Activated naive CD4-positive, alpha-beta T cell treated with anti-CD3 and anti-CD28 coated beads for 36 hours (primary cell): ENCODE measurements at regions of chr1 and their contacts with region 1.

Region 1: DNA sequence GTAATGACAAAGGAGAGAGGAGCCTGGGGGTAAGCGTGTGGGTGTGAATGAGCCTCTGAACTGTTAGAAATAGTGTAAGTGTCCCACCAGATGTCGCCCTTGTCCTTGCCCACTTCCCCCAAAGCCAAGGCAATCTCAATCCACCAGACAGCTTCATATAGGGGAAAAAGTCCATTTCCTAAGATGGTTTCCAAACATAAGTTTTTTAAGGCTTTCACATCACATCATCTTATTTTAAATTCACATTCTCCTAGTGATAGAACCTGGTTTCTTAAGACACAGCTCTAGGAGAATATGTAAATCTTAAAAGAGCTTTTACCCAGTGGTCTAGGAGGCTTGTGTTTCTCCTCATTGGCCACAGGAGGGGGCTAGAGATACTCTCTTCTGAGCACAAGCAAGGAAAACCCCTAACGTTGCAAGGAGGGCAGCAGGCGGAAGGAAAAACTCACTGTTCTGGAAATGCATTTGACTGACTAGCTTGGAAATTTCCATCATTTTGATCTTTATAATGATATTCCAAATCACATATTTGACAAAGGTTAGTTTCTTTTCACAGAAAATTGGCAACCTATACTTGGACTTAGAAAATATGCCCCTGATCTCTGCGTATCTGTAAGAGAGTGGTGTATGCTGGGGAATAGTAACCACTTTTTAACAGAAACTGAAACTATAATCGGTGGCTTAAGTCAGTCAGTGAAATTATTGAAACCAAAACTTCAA is 51.9 kb upstream of the LPAR3 start:
- DNase-seq: peak; percentile 81
- H3K4me3 Mint-ChIP-seq: peak overlapping the region; percentile 74
- H3K27ac Mint-ChIP-seq: peak overlapping the region; percentile 92
- H3K4me1 Mint-ChIP-seq: peaks cover 14% of the 10 kb centered on the region
- H3K27me3 Mint-ChIP-seq: no peaks in the 10 kb centered on the region

Region 2: GRCh38 chr1:84973498-84974334 is 28.8 kb after region 1 on chr1:
- CTCF ChIA-PET with region 1: interaction called, 7 read pairs
- intact Hi-C with region 1: loop called (anchors 2 kb)
- DNase-seq: no peak
- H3K4me3 Mint-ChIP-seq: no peak overlapping the region
- H3K27ac Mint-ChIP-seq: no peak overlapping the region
- H3K4me1 Mint-ChIP-seq: peaks cover 17% of the 10 kb centered on the region
- H3K27me3 Mint-ChIP-seq: peaks cover 2% of the 10 kb centered on the region

Region 3: DNA sequence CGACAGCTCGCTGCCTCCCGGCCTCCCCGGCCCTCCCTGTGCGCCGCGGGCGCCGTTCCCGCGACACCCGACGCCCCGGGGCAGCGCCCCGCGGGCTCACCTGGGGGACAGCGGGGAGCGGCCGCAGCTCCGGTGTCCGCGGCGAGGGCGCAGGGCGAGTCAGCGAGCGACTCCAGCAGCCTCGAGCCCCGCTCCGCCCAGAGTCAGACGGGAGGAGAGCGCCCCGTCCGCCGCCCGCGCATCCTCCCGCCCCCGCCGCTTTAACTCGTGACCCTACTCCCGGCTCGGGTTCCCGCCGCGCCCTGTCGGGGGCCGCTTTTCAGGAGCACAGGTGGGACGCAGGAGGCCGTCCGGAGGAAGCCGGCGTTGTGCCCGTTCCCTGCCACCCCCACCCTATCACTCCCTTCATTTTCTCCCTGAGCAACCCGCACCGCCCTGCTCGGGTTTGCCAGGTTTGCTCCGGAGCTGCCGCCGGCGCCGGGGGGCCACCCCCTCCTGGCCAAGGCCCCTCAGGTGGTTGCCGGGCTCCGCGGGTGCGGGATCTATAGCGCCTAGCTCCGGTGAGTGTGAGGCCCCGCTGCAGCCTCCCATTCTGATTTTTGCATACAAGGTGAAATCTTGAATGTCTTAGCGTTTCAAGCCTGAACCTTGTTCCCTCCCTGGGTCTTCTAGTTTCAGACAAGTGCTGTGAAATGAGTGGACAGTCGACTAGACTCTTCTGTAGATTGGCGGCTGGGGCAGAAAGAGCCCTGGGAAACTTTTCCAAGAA is 103.6 kb after region 1 on chr1 and contains the start of gene MCOLN3:
- CTCF ChIA-PET with region 1: interaction called, 8 read pairs
- intact Hi-C with region 1: loop called (anchors 1 kb)
- DNase-seq: peak; percentile 52
- H3K4me3 Mint-ChIP-seq: peak within 1 kb of the TSS; percentile 68
- H3K27ac Mint-ChIP-seq: no peak within 1 kb of the TSS
- H3K4me1 Mint-ChIP-seq: peaks cover 18% of the 10 kb centered on the region
- H3K27me3 Mint-ChIP-seq: peaks cover 33% of the 10 kb centered on the region
- total RNA-seq, gene MCOLN3: 0.19 to 0.30 TPM

Region 4: DNA sequence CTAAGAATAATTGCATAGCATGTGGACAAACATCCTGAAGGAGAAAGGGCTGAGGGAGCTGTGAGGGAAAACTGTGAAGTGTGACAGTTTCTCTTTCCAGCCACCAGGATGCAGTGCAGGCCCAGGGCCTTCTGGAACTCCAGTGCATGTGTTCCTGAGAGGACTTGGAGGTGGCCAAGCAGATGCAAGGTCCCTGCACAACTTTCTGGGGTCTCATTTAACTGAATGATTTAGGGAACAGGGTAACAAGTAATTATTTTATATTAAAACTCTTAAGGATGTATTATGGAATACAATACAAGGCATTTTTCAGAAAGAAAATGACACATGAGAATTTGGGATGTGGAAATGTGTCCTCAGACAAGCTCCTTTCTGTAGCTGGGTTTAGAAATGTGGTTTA is 164.5 kb after region 1 on chr1:
- CTCF ChIA-PET with region 1: interaction called, 35 read pairs
- intact Hi-C with region 1: loop called (anchors 1 kb)
- DNase-seq: peak; percentile 48
- H3K4me3 Mint-ChIP-seq: no peak overlapping the region
- H3K27ac Mint-ChIP-seq: no peak overlapping the region
- H3K4me1 Mint-ChIP-seq: no peaks in the 10 kb centered on the region
- H3K27me3 Mint-ChIP-seq: no peaks in the 10 kb centered on the region

Region 5: DNA sequence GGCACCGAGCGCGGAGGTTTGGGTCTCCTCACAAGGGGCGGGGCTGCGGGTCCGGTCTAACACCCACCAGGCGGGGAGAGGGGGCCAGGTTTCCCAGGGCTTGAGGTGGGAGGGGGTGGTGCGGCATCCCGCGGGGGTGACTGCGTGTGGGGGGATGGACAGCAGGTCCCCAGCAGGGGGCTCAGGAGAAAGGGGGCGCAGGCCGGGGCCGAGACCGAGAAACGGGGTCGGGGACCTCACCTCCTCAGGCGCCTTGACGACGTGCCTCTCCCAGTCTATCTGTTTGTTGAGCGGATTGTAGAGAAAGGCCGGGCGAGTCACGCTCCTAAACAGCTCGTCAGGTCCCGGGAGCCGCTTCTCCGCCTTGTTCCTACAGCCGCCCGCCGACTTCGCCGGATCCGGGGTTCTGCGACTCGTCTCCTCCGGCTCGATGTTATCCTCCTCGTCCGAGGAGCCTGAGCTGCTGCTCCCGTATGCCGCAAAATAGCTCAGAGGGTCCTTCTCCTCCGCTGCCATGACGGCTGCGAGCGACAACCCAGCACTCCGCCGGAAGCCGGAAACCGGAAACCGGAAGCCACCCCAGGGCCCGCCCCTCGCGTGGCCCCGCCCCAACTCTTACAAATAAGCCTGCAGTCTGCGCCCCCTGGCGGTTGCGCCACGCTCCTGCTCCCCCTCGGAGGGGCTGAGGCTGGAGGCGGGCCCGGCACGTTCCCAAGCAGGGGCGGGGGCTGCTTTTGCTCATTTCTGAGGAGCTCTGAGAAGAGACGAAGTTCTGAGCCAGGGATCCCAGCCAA is 314.4 kb after region 1 on chr1 and contains the start of gene C1orf52:
- CTCF ChIA-PET with region 1: interaction called, 111 read pairs
- intact Hi-C with region 1: loop called (anchors 1 kb)
- DNase-seq: peak; percentile 97
- H3K4me3 Mint-ChIP-seq: peak within 1 kb of the TSS; percentile 96
- H3K27ac Mint-ChIP-seq: peak within 1 kb of the TSS; percentile 89
- H3K4me1 Mint-ChIP-seq: peaks cover 38% of the 10 kb centered on the region
- H3K27me3 Mint-ChIP-seq: no peaks in the 10 kb centered on the region
- total RNA-seq, gene C1orf52: 28.3 to 29.5 TPM

Region 6: DNA sequence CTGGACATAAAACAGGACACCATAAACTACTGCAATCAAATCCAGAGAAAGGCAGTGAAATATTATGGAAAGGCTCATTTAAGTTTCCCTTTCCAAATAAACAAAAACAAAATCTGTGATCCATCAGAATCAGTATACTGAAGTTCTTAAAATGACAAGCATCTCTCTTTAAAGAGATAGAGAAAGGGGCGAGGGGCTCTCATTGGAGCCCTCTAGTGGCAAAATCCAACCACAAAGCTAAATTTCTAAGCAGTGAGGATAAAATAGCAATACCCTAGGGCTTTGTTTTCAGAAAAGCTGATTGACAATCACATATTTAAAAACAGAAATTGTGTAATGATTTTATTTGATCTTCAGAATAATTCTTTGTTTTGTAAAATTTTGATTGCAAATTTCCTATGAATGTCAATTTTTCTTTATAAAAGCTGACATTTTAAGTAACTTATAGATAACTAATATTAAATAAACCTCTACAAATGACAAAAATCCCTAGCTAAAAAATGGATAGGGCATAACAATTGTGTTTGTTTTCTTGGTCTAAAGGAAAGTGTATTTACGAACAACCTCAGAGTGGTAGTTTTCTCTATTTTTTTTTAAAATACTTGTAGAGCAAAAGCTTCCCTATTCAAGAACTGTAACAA is 1073.5 kb after region 1 on chr1:
- CTCF ChIA-PET with region 1: interaction called, 3 read pairs
- intact Hi-C with region 1: loop called (anchors 5 kb)
- DNase-seq: peak; percentile 13
- H3K4me3 Mint-ChIP-seq: no peak overlapping the region
- H3K27ac Mint-ChIP-seq: no peak overlapping the region
- H3K4me1 Mint-ChIP-seq: no peaks in the 10 kb centered on the region
- H3K27me3 Mint-ChIP-seq: no peaks in the 10 kb centered on the region